CD8-positive, alpha-beta T cell (primary cell): ENCODE measurements at regions of chr11 and their contacts with region 1.

Region 1: DNA sequence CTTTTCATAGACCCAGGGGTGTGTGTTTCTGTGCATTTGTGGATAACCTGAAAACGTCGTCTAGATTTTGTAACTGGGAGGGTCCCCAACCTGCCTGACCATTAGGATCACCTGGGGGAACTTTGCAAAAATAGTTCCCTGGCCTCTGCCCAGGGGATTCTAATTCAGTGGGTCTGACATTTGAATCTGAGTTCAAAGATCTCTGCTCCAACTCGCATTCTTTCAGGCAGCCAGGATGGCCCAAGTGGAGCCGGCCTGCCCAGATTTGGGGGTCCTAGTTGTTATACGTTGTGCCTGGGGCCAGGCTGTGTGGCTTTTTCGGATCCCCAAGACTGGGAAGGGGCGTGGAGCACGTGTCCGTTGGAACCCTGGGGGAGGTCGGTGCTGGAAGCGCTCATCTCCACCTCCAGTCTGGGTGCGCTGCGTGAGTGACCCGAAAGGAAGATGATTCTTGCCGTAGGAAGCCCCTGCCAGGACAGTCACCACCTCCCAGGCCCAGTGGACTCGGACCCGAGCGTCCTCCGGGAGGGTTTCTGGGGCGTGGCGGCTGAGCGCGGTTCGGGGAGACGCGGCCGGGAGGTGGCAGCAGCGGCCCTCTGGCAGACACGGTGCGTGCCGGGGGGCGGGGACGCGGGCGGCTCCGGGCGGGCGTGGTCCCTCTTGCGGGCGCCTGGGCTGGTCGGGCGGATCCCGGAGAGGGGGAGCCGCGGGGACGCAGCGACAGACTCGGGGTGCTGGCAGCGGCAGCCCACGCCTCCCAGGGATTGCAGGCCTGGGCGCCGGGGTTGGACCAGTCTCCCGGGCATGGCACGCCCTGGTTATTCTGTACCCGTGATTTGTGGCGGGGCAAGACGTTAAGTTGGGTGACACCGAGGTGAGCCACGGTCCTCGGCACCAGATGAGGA is 29.2 kb upstream of the PLET1 start:
- DNase-seq: peak; percentile 62 to 91 (median 86)
- ATAC-seq: peak; percentile 99
- H3K4me3 ChIP-seq: peak overlapping the region; percentile 43 to 53
- H3K4me3 Mint-ChIP-seq: peak overlapping the region; percentile 75
- H3K27ac ChIP-seq: no peak overlapping the region
- H3K27ac Mint-ChIP-seq: no peak overlapping the region
- H3K4me1 ChIP-seq: peaks cover 6% of the 10 kb centered on the region
- H3K4me1 Mint-ChIP-seq: peaks cover 14% of the 10 kb centered on the region
- H3K27me3 ChIP-seq: no peaks in the 10 kb centered on the region
- H3K27me3 Mint-ChIP-seq: no peaks in the 10 kb centered on the region
- CTCF ChIP-seq: peak; percentile 82

Region 2: DNA sequence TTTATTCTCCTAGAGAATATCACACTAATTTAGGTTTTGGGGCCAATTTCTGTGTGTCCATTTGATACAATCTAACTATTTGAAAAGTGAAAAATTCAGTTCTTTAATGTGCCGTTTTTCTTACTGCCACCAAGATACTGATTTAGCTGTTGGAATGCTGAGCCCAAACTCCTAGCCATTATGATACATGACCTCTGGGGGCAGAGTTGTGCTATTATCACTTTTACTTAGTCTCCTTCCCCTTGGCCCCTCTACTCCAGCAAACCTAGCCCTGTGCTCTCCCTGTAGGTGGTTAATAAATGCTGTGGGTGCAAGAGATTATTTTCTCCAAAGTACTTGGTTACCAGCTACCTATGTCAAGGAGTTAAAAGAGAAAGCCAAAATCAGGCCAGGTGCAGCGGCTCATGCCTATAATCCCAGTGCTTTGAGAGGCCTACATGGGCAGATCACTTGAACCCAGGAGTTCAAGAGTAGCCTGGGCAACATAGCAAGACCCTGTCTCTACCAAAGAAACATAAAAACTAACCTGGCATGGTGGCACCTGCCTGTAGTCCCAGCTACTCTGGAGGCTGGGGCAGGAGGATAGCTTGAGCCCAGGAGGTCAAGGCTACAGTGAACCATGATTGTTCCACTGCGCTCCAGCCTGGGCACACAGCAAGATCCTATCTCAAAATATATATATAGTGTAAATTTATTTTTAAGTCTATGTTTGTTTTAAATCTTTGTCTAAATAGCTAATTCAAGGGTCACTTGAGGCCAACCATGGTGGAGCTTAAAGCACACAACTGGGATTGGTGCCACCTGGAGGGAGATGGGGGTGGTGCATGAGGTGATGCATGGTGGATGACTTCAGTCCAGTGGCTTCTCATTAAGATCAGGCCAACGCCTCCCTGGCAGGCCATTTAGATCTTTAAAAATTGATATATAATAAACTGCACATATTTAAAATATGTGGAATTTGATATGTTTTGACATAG is 164.0 kb after region 1 on chr11:
- CTCF ChIA-PET with region 1: interaction called, 6 read pairs
- POLR2A ChIA-PET with region 1: no interaction called
- intact Hi-C with region 1: loop called (anchors 1 to 2 kb)
- DNase-seq: peak in 4 of 9 experiments; percentile 31 to 48 (median 36)
- ATAC-seq: no peak
- H3K4me3 ChIP-seq: no peak overlapping the region
- H3K4me3 Mint-ChIP-seq: no peak overlapping the region
- H3K27ac ChIP-seq: no peak overlapping the region
- H3K27ac Mint-ChIP-seq: no peak overlapping the region
- H3K4me1 ChIP-seq: no peaks in the 10 kb centered on the region
- H3K4me1 Mint-ChIP-seq: no peaks in the 10 kb centered on the region
- H3K27me3 ChIP-seq: no peaks in the 10 kb centered on the region
- H3K27me3 Mint-ChIP-seq: peaks cover 5% of the 10 kb centered on the region
- CTCF ChIP-seq: peak; percentile 18

Region 3: GRCh38 chr11:112555491-112556364 is 265.9 kb after region 1 on chr11:
- CTCF ChIA-PET with region 1: interaction called, 39 read pairs
- POLR2A ChIA-PET with region 1: interaction called, 4 read pairs
- intact Hi-C with region 1: loop called (anchors 1 kb)
- DNase-seq: peak; percentile 32 to 74 (median 62)
- ATAC-seq: peak; percentile 62
- H3K4me3 ChIP-seq: no peak overlapping the region
- H3K4me3 Mint-ChIP-seq: no peak overlapping the region
- H3K27ac ChIP-seq: no peak overlapping the region
- H3K27ac Mint-ChIP-seq: no peak overlapping the region
- H3K4me1 ChIP-seq: no peaks in the 10 kb centered on the region
- H3K4me1 Mint-ChIP-seq: no peaks in the 10 kb centered on the region
- H3K27me3 ChIP-seq: no peaks in the 10 kb centered on the region
- H3K27me3 Mint-ChIP-seq: peaks cover 9% of the 10 kb centered on the region
- CTCF ChIP-seq: peak; percentile 52

Region 4: DNA sequence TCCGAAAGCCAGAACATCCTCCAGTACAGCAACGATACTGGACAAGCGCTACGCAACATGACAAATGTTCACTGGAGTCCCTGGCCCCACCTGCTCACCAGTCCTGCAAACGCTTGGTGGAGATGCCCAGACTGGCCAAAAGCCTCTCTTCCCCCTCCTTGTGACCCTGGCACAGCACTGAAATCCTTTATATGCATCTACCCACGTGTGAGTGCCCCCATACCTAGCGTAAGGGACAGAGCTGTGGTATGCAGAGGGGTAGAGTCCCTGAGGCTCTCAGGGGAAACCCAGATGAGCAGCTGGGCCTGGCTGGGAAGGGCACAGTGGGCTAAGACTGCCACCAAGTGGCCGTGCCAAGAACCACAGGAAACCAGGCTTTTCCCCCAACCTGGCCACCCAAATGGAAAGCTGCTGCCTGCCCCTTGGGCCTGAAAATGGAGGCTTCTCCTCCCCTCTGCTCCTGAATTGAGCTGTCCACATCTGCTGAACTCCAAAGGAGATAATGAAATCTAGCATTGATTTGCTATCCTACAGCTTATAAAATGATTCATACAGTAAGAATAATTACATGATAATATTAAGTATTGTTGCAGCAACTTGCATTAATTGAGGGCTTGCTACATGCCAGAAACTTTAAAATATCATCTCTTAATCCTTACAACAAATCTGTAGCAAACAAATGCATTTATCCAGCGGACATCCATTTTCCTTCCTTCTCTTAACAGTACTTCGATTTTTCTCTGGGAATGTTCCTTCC is 999.8 kb after region 1 on chr11:
- CTCF ChIA-PET with region 1: interaction called, 13 read pairs
- POLR2A ChIA-PET with region 1: no interaction called
- intact Hi-C with region 1: loop called (anchors 1 kb)
- DNase-seq: peak; percentile 24 to 74 (median 54)
- ATAC-seq: peak; percentile 85
- H3K4me3 ChIP-seq: no peak overlapping the region
- H3K4me3 Mint-ChIP-seq: no peak overlapping the region
- H3K27ac ChIP-seq: no peak overlapping the region
- H3K27ac Mint-ChIP-seq: no peak overlapping the region
- H3K4me1 ChIP-seq: no peaks in the 10 kb centered on the region
- H3K4me1 Mint-ChIP-seq: no peaks in the 10 kb centered on the region
- H3K27me3 ChIP-seq: no peaks in the 10 kb centered on the region
- H3K27me3 Mint-ChIP-seq: peaks cover 24% of the 10 kb centered on the region
- CTCF ChIP-seq: peak; percentile 64

Region 5: GRCh38 chr11:113532697-113533424 is 1243.0 kb after region 1 on chr11:
- CTCF ChIA-PET with region 1: no interaction called
- POLR2A ChIA-PET with region 1: no interaction called
- intact Hi-C with region 1: loop called (anchors 5 kb)
- DNase-seq: peak; percentile 5 to 68 (median 59)
- ATAC-seq: no peak
- H3K4me3 ChIP-seq: no peak overlapping the region
- H3K4me3 Mint-ChIP-seq: no peak overlapping the region
- H3K27ac ChIP-seq: no peak overlapping the region
- H3K27ac Mint-ChIP-seq: no peak overlapping the region
- H3K4me1 ChIP-seq: no peaks in the 10 kb centered on the region
- H3K4me1 Mint-ChIP-seq: peaks cover 4% of the 10 kb centered on the region
- H3K27me3 ChIP-seq: no peaks in the 10 kb centered on the region
- H3K27me3 Mint-ChIP-seq: peaks cover 17% of the 10 kb centered on the region
- CTCF ChIP-seq: peak; percentile 48

Region 6: DNA sequence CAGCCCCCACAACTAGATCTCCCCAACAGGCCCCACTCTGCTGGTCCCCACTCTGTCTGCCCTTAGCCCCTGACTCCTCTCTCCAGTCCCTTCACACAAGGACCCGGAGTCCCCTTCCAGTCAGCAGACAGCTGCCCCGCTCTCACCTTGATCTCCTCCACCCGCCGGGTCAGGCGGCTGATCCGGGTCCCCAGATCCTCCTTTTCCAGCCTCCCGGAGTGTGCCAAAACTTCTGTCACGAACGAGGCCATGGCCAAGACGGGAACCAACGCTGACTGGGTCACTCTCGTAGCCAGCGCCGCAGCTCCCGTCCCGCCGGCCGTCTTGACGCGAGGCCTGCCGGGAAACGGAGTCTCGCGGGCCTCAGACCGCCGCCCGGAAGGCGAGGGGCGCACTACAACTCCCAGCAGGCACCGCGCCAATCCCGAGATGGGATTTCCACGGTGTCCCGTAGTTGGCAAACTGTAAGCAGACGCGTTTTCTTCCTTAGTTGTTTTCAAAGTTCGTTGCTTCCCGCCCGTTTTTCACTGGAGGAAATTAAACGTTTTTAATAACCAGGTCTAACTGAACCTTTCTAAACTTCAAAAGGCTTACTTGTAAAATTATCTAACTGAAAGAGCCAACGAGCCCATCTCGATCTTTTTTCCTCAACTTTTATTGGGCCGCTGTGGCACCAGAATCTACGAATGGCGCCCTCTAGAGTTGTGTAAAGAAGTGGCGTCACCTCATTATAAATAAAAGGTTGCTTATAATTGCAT is 1483.8 kb after region 1 on chr11 and contains the start of gene ZW10:
- CTCF ChIA-PET with region 1: no interaction called
- POLR2A ChIA-PET with region 1: no interaction called
- intact Hi-C with region 1: loop called in 1 of 2 experiments (anchors 5 kb)
- DNase-seq: peak; percentile 79 to 96 (median 91)
- ATAC-seq: peak; percentile 98
- H3K4me3 ChIP-seq: peak within 1 kb of the TSS; percentile 89 to 90
- H3K4me3 Mint-ChIP-seq: peak within 1 kb of the TSS; percentile 99
- H3K27ac ChIP-seq: peak within 1 kb of the TSS; percentile 59 to 73
- H3K27ac Mint-ChIP-seq: peak within 1 kb of the TSS; percentile 89
- H3K4me1 ChIP-seq: peaks cover 3% of the 10 kb centered on the region
- H3K4me1 Mint-ChIP-seq: peaks cover 28% of the 10 kb centered on the region
- H3K27me3 ChIP-seq: no peaks in the 10 kb centered on the region
- H3K27me3 Mint-ChIP-seq: no peaks in the 10 kb centered on the region
- CTCF ChIP-seq: peak; percentile 96
- total RNA-seq, gene ZW10: 2.6 to 2.8 TPM

Region 7: GRCh38 chr11:113796663-113797259 is 1506.9 kb after region 1 on chr11:
- CTCF ChIA-PET with region 1: no interaction called
- POLR2A ChIA-PET with region 1: no interaction called
- intact Hi-C with region 1: loop called in 1 of 2 experiments (anchors 5 kb)
- DNase-seq: peak in 3 of 9 experiments; percentile 18 to 50 (median 35)
- ATAC-seq: peak; percentile 57
- H3K4me3 ChIP-seq: no peak overlapping the region
- H3K4me3 Mint-ChIP-seq: no peak overlapping the region
- H3K27ac ChIP-seq: no peak overlapping the region
- H3K27ac Mint-ChIP-seq: no peak overlapping the region
- H3K4me1 ChIP-seq: no peaks in the 10 kb centered on the region
- H3K4me1 Mint-ChIP-seq: no peaks in the 10 kb centered on the region
- H3K27me3 ChIP-seq: no peaks in the 10 kb centered on the region
- H3K27me3 Mint-ChIP-seq: no peaks in the 10 kb centered on the region
- CTCF ChIP-seq: peak; percentile 60